ENCODE measurements at regions of chr3 and their contacts with region 1.

Region 1: GRCh38 chr3:66938338-66938963 is 59.7 kb upstream of the KBTBD8 start:
- DNase-seq: peak; percentile 61
- H3K4me3 ChIP-seq: no peak overlapping the region
- H3K27ac ChIP-seq: no peak overlapping the region
- H3K4me1 ChIP-seq: no peaks in the 10 kb centered on the region
- H3K27me3 ChIP-seq: peaks cover 0 to 2% of the 10 kb centered on the region in 2 experiments
- CTCF ChIP-seq: peak; percentile 58 to 66
- POLR2A ChIP-seq: no peak

Region 2: GRCh38 chr3:66952357-66952756 is 13.9 kb after region 1 on chr3:
- CTCF ChIA-PET with region 1: interaction called, 10 read pairs
- POLR2A ChIA-PET with region 1: no interaction called
- dilution Hi-C with region 1: no loop called
- intact Hi-C with region 1: no loop called
- DNase-seq: no peak
- H3K4me3 ChIP-seq: no peak overlapping the region
- H3K27ac ChIP-seq: no peak overlapping the region
- H3K4me1 ChIP-seq: no peaks in the 10 kb centered on the region
- H3K27me3 ChIP-seq: peaks cover 0 to 4% of the 10 kb centered on the region in 2 experiments
- CTCF ChIP-seq: no peak
- POLR2A ChIP-seq: no peak

Region 3: DNA sequence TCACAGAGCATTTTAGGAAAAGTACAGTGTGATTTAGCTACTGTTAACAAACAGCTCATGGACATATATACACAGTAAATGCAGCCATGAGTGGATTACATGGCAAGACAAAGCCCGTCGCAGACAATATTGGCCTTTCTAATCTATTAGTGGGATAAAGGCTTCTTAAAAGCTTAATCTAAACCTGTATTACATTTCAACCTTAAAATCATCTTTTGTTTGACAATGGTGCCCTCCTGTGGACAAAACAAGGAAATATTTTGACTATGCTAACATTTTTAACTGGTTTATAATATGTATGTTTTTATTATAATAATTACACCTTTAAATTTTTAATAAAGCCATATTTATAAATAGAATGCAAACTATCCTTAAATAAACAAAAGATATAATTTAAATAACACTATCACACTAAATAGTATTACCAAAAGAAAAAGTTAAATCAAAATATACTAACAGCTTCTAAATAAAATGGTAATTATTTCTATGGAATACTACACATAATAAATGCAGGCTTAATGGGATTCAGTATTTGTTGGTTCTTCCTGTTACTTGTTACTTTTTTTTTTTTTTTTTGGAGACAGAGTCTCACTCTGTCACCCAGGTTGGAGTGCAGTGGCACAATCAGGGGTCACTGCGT is 1955.3 kb after region 1 on chr3:
- CTCF ChIA-PET with region 1: interaction called, 55 read pairs
- POLR2A ChIA-PET with region 1: no interaction called
- dilution Hi-C with region 1: no loop called
- intact Hi-C with region 1: loop called (anchors 2 kb)
- DNase-seq: peak; percentile 63
- H3K4me3 ChIP-seq: no peak overlapping the region
- H3K27ac ChIP-seq: no peak overlapping the region
- H3K4me1 ChIP-seq: no peaks in the 10 kb centered on the region
- H3K27me3 ChIP-seq: peaks cover 4 to 5% of the 10 kb centered on the region in 2 experiments
- CTCF ChIP-seq: peak in 1 of 2 donors; percentile 15
- POLR2A ChIP-seq: no peak

Measured in endothelial cell of umbilical vein (primary cell).